ENCODE measurements at regions of chr4 and their contacts with region 1.

Region 1: DNA sequence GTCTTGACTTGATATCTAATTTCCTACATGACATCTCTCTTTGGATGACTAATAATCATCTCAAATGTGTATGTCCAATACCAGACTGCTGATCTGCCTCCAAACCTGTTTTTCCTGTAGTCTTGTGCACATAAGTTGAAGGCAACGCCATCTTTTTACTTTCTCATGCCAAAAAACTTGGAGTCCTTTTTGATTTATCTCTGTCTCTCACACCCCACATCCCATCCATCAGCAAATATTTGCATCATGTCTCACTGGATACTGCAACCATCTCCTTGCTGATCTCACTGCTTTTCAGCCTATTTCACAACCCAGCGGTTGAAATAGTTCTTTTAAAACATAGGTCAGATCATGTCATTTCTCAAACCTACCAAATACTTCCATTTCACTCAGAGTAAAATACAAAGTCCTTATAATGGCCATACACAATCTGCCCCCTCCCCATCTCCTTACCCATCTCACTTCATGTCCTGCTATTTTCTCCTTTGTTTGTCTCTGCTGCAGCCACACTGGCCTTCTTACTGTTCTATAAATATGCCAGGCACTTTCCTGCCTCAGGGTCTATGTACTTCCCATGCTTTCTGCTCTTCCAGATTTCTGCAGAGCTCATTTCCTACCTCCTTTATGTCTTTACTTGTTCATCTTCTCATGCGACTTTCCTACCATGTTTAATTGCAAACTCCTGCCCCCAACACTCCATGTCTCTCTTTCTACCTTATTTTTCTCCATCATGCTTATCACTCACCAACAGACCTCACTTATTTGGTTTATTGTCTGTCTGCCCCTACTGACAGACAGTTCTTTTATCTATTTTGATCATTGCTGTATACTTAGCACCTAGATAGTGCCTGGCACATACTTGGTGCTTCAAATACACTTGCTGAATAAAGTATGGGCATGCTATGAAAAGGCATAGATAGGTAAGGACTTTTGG is 98.8 kb downstream of the ANXA3 start:
- DNase-seq: peak; percentile 34 to 65 (median 52)
- ATAC-seq: peak; percentile 71
- H3K4me3 ChIP-seq: no peak overlapping the region
- H3K27ac ChIP-seq: peak overlapping the region; percentile 39; the same call in 2 of the 3 replicates
- H3K4me1 ChIP-seq: peaks cover 44 to 61% of the 10 kb centered on the region in 2 experiments
- H3K27me3 ChIP-seq: no peaks in the 10 kb centered on the region
- CTCF ChIP-seq: no peak
- EP300 ChIP-seq: peak; percentile 85
- POLR2A ChIP-seq: no peak
- RAD21 ChIP-seq: 0 out of 4 replicates have a peak, but pooled peaks of 1 of the 2 experiments have one; percentile 16

Region 2: DNA sequence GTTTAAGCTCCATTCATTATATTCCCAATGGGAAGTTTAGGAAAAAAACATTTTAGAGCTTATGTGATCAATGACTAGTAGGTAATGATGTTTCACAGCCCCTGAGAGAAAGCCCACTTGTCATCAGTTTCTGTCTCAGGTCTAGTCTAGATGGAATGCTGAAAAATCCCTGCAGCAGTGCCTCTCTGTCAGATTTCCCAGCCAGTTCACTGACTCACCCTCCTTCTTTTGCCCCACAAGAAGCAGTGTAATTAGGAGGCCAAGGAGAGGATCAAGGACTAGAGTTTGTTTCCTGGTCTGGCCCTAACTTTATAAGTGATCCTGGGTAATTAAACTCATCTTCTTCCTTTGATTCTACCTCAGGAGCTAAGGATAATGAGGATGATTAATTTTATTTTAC is 217.5 kb before region 1 on chr4:
- CTCF ChIA-PET with region 1: no interaction called
- POLR2A ChIA-PET with region 1: no interaction called
- in situ Hi-C with region 1: no loop called
- intact Hi-C with region 1: no loop called
- DNase-seq: no peak
- ATAC-seq: no peak
- H3K4me3 ChIP-seq: no peak overlapping the region
- H3K27ac ChIP-seq: no peak overlapping the region
- H3K4me1 ChIP-seq: no peaks in the 10 kb centered on the region
- H3K27me3 ChIP-seq: peaks cover 19% of the 10 kb centered on the region in 2 experiments
- CTCF ChIP-seq: no peak
- EP300 ChIP-seq: no peak
- POLR2A ChIP-seq: no peak
- RAD21 ChIP-seq: no peak

Region 3: DNA sequence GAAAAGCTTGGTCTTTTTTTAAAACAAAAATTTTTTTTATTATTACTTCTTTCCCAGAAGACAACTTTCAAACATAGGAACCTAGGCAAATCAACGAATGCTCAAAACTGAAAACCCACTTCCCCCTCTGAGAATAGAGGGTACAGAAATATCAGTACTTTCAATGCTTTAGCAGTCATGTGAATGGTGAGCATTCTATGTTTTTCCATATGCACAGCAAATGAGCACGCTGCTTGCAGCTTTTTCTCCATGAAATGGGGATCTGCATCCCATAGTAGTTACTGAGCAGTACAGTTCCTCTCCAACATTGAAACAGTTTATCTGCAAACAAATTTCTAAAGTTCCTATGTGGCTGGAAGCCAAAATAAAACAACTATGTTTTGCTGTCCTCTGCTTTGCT is 17.4 kb after region 1 on chr4:
- CTCF ChIA-PET with region 1: no interaction called
- POLR2A ChIA-PET with region 1: interaction called, 3 read pairs
- in situ Hi-C with region 1: no loop called
- intact Hi-C with region 1: loop called (anchors 2 kb)
- DNase-seq: no peak
- ATAC-seq: no peak
- H3K4me3 ChIP-seq: no peak overlapping the region
- H3K27ac ChIP-seq: no peak overlapping the region
- H3K4me1 ChIP-seq: peaks cover 28 to 69% of the 10 kb centered on the region in 2 experiments
- H3K27me3 ChIP-seq: no peaks in the 10 kb centered on the region
- CTCF ChIP-seq: no peak
- EP300 ChIP-seq: no peak
- POLR2A ChIP-seq: no peak
- RAD21 ChIP-seq: no peak

Measured in K562 (cell line).